Esophagus muscularis mucosa (tissue), 4 donors: ENCODE measurements at regions of chr18 and their contacts with region 1.

Region 1: GRCh38 chr18:12278741-12279682 is 24.9 kb downstream of the CIDEA start:
- DNase-seq: peak; percentile 94
- H3K4me3 ChIP-seq: peak overlapping the region; percentile 48 to 61 (median 59)
- H3K27ac ChIP-seq: peak overlapping the region; percentile 93 to 98 (median 96)
- H3K4me1 ChIP-seq: peaks cover 18 to 58% (median 56%) of the 10 kb centered on the region in 4 donors
- H3K27me3 ChIP-seq: no peaks in the 10 kb centered on the region
- CTCF ChIP-seq: peak in 2 of 3 experiments; percentile 23 to 24
- EP300 ChIP-seq: peak; percentile 52
- POLR2A ChIP-seq: peak; percentile 43

Region 2: GRCh38 chr18:12308386-12309100 is 29.5 kb after region 1 on chr18:
- intact Hi-C with region 1: loop called (anchors 1 kb)
- DNase-seq: peak; percentile 97
- H3K4me3 ChIP-seq: peak overlapping the region; percentile 78 to 99 (median 86)
- H3K27ac ChIP-seq: peak overlapping the region; percentile 98 to 100 (median 100)
- H3K4me1 ChIP-seq: peaks cover 25 to 68% (median 63%) of the 10 kb centered on the region in 4 donors
- H3K27me3 ChIP-seq: no peaks in the 10 kb centered on the region
- CTCF ChIP-seq: no peak
- EP300 ChIP-seq: no peak
- POLR2A ChIP-seq: peak; percentile 65

Region 3: DNA sequence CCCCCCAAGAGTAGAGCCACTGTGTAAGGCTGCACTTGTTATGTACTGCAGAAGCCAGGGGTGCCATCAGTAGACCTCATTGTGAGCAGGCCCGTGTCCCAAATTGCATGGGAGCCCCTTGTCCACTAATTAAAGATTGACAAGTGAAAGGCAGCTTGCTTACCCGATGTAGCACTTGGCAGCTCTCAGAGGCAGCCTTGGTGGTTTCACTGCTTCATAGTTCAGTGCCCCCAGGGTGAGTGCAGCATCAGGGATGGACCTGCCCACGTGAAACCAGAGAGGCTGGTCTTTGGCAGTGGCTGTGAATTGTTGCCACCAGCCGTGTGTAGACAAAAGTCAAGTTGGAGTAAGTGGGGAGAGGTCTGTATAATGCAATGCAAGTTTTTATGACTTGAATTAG is 42.3 kb after region 1 on chr18:
- intact Hi-C with region 1: no loop called
- DNase-seq: no peak
- H3K4me3 ChIP-seq: no peak overlapping the region
- H3K27ac ChIP-seq: peak overlapping the region; percentile 12 to 54 (median 28)
- H3K4me1 ChIP-seq: peaks cover 45 to 58% (median 49%) of the 10 kb centered on the region in 4 donors
- H3K27me3 ChIP-seq: no peaks in the 10 kb centered on the region
- CTCF ChIP-seq: no peak
- EP300 ChIP-seq: no peak
- POLR2A ChIP-seq: no peak